Thyroid gland (tissue), 4 donors: ENCODE measurements at regions of chr3 and their contacts with region 1.

Region 1: GRCh38 chr3:45950686-45951600 is 7.7 kb downstream of the CXCR6 start:
- DNase-seq: no peak
- H3K4me3 ChIP-seq: no peak overlapping the region
- H3K27ac ChIP-seq: peak overlapping the region in 2 of 3 donors; percentile 89 to 91
- H3K4me1 ChIP-seq: peaks cover 32 to 46% of the 10 kb centered on the region in 2 donors
- H3K27me3 ChIP-seq: no peaks in the 10 kb centered on the region
- CTCF ChIP-seq: no peak
- POLR2A ChIP-seq: no peak

Region 2: GRCh38 chr3:45994419-45995235 is 43.7 kb after region 1 on chr3:
- intact Hi-C with region 1: loop called (anchors 5 kb)
- DNase-seq: peak in 1 of 2 donors; percentile 36
- H3K4me3 ChIP-seq: peak overlapping the region; percentile 72 to 74 (median 74)
- H3K27ac ChIP-seq: peak overlapping the region; percentile 84 to 94 (median 87)
- H3K4me1 ChIP-seq: peaks cover 37 to 52% of the 10 kb centered on the region in 2 donors
- H3K27me3 ChIP-seq: no peaks in the 10 kb centered on the region
- CTCF ChIP-seq: no peak
- POLR2A ChIP-seq: no peak